Activated CD8-positive, alpha-beta T cell treated with anti-CD3 and anti-CD28 coated beads, Interleukin-2, amount 10 ng/mL, durations not matched to agents 7 days and 5 days (primary cell): ENCODE measurements at regions of chr3 and their contacts with region 1.

Region 1: GRCh38 chr3:42780892-42781700 is 8.0 kb upstream of the CCDC13 start:
- DNase-seq: peak; percentile 63
- ATAC-seq: peak; percentile 87
- H3K4me3 Mint-ChIP-seq: no peak overlapping the region
- H3K27ac Mint-ChIP-seq: no peak overlapping the region
- H3K4me1 Mint-ChIP-seq: no peaks in the 10 kb centered on the region
- H3K27me3 Mint-ChIP-seq: no peaks in the 10 kb centered on the region

Region 2: GRCh38 chr3:42831321-42831713 is 50.2 kb after region 1 on chr3:
- CTCF ChIA-PET with region 1: interaction called, 23 read pairs
- POLR2A ChIA-PET with region 1: no interaction called
- DNase-seq: peak; percentile 89
- ATAC-seq: peak; percentile 83
- H3K4me3 Mint-ChIP-seq: no peak overlapping the region
- H3K27ac Mint-ChIP-seq: no peak overlapping the region
- H3K4me1 Mint-ChIP-seq: peaks cover 13% of the 10 kb centered on the region
- H3K27me3 Mint-ChIP-seq: peaks cover 19% of the 10 kb centered on the region

Region 3: DNA sequence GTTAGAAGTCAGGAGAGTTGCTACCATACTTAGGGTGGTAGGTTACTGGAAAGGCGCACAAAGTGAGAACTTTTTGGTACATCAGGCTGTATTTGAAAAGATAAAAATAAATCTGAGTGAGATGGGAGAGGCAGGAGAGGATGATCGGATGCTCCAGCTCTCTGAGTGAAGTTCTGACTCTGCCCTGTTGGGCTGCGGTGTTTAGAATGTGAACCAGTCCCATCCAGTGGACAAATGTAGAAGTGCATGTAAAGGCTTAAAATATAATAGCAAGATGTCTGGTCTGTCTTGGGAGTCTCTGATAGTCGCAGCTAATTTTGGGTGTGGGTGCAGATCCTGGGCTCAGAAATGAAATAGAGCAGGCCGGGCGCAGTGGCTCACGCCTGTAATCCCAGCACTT is 58.5 kb after region 1 on chr3:
- CTCF ChIA-PET with region 1: interaction called, 13 read pairs
- POLR2A ChIA-PET with region 1: no interaction called
- DNase-seq: peak; percentile 56
- ATAC-seq: peak; percentile 97
- H3K4me3 Mint-ChIP-seq: no peak overlapping the region
- H3K27ac Mint-ChIP-seq: no peak overlapping the region
- H3K4me1 Mint-ChIP-seq: peaks cover 4% of the 10 kb centered on the region
- H3K27me3 Mint-ChIP-seq: peaks cover 12% of the 10 kb centered on the region

Region 4: GRCh38 chr3:42880601-42881451 is 99.7 kb after region 1 on chr3:
- CTCF ChIA-PET with region 1: interaction called, 22 read pairs
- POLR2A ChIA-PET with region 1: no interaction called
- DNase-seq: peak; percentile 95
- ATAC-seq: peak; percentile 99
- H3K4me3 Mint-ChIP-seq: peak overlapping the region; percentile 79
- H3K27ac Mint-ChIP-seq: peak overlapping the region; percentile 93
- H3K4me1 Mint-ChIP-seq: peaks cover 15% of the 10 kb centered on the region
- H3K27me3 Mint-ChIP-seq: peaks cover 12% of the 10 kb centered on the region

Region 5: DNA sequence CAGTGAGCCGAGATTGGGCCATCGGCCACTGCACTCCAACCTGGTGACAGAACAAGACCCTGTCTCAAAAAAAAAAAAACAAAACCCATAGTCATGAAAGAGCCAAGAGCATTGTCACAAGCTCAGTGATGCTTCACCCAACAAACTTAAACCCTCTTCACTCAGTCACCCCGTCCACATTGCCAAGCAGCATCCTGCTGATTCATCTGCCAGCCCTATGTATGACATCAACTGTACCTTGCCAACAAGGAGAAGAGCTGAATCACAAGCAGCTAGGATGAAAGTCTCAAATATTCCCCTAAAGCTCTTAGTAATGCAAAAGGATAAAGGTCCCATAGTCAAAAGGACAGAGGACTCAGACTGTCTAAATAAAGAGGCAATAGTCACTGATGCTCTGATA is 750.7 kb after region 1 on chr3:
- CTCF ChIA-PET with region 1: no interaction called
- POLR2A ChIA-PET with region 1: no interaction called
- DNase-seq: no peak
- ATAC-seq: no peak
- H3K4me3 Mint-ChIP-seq: no peak overlapping the region
- H3K27ac Mint-ChIP-seq: no peak overlapping the region
- H3K4me1 Mint-ChIP-seq: no peaks in the 10 kb centered on the region
- H3K27me3 Mint-ChIP-seq: no peaks in the 10 kb centered on the region